A549 (cell line): ENCODE measurements at regions of chr11 and their contacts with region 1.

Region 1: GRCh38 chr11:36289226-36289852 is at the start of gene COMMD9:
- DNase-seq: peak; percentile 94
- ATAC-seq: peak; percentile 96 to 99
- H3K4me3 ChIP-seq: peak within 1 kb of the TSS; percentile 98
- H3K27ac ChIP-seq: peak within 1 kb of the TSS; percentile 70 to 85
- H3K4me1 ChIP-seq: peaks cover 6% of the 10 kb centered on the region; the same call in 1 of the 3 replicates
- CTCF ChIP-seq: no peak
- EP300 ChIP-seq: no peak
- POLR2A ChIP-seq: peak; percentile 48
- RAD21 ChIP-seq: no peak
- polyA plus RNA-seq, gene COMMD9: 37.3 and 44.3 TPM in 2 replicates

Region 2: DNA sequence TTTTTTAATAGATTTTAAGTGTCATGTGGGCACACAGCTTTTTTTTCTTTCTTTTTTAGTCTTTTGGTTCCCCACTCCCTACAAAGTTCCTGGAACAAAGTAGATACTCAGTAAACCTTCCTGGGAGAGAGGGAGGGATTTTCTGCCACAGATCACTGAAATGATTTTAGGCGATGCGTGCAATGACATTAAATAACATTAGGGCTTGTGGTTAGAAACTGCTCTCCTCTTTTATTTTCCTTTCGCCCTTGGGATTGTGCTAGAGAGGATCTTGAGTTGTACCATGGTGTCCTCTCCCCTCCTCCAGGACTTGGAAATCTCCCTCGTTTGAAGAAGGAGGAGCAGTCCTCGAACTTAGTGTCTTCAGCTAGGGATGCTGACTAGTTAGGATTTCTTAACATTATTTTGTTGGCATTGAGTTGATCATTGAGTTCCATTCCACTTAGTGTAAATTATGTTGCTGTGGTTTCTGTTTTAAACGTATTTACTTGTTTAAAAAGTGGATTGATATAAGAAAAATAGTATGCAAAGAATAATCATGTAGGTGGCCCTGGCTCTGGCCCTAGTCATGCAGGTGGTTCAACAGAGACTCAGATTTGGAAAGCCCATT is 132.3 kb after region 1 on chr11:
- CTCF ChIA-PET with region 1: interaction called, 11 read pairs
- POLR2A ChIA-PET with region 1: no interaction called
- DNase-seq: no peak
- ATAC-seq: no peak
- H3K4me3 ChIP-seq: no peak overlapping the region
- H3K27ac ChIP-seq: peak overlapping the region; percentile 64 to 65
- H3K4me1 ChIP-seq: peaks cover 39% of the 10 kb centered on the region
- CTCF ChIP-seq: no peak
- EP300 ChIP-seq: no peak
- POLR2A ChIP-seq: no peak
- RAD21 ChIP-seq: no peak

Region 3: GRCh38 chr11:36469063-36469462 is 179.7 kb after region 1 on chr11:
- CTCF ChIA-PET with region 1: interaction called, 13 read pairs
- POLR2A ChIA-PET with region 1: no interaction called
- DNase-seq: peak in 1 of 2 experiments; percentile 16
- ATAC-seq: no peak
- H3K4me3 ChIP-seq: no peak overlapping the region
- H3K27ac ChIP-seq: no peak overlapping the region
- H3K4me1 ChIP-seq: no peaks in the 10 kb centered on the region
- CTCF ChIP-seq: no peak
- EP300 ChIP-seq: no peak
- POLR2A ChIP-seq: no peak
- RAD21 ChIP-seq: no peak

Region 4: GRCh38 chr11:36492724-36493304 is 203.5 kb after region 1 on chr11:
- CTCF ChIA-PET with region 1: interaction called, 31 read pairs
- POLR2A ChIA-PET with region 1: interaction called, 5 read pairs
- DNase-seq: peak; percentile 48 to 68
- ATAC-seq: peak; percentile 67 to 77; a peak in 5 of 6 replicates
- H3K4me3 ChIP-seq: no peak overlapping the region
- H3K27ac ChIP-seq: no peak overlapping the region
- H3K4me1 ChIP-seq: no peaks in the 10 kb centered on the region
- CTCF ChIP-seq: peak; percentile 89
- EP300 ChIP-seq: no peak
- POLR2A ChIP-seq: no peak
- RAD21 ChIP-seq: peak; percentile 73 to 81

Region 5: GRCh38 chr11:36500315-36500721 is 211.0 kb after region 1 on chr11:
- CTCF ChIA-PET with region 1: interaction called, 10 read pairs
- POLR2A ChIA-PET with region 1: no interaction called
- DNase-seq: peak; percentile 10 to 66
- ATAC-seq: peak; percentile 94 to 96
- H3K4me3 ChIP-seq: no peak overlapping the region
- H3K27ac ChIP-seq: peak overlapping the region in 1 of 2 experiments; percentile 47; a peak in 2 of 6 replicates
- H3K4me1 ChIP-seq: peaks cover 16% of the 10 kb centered on the region
- CTCF ChIP-seq: no peak
- EP300 ChIP-seq: no peak
- POLR2A ChIP-seq: no peak
- RAD21 ChIP-seq: no peak